ENCODE measurements at regions of chr7 and their contacts with region 1.

Region 1: DNA sequence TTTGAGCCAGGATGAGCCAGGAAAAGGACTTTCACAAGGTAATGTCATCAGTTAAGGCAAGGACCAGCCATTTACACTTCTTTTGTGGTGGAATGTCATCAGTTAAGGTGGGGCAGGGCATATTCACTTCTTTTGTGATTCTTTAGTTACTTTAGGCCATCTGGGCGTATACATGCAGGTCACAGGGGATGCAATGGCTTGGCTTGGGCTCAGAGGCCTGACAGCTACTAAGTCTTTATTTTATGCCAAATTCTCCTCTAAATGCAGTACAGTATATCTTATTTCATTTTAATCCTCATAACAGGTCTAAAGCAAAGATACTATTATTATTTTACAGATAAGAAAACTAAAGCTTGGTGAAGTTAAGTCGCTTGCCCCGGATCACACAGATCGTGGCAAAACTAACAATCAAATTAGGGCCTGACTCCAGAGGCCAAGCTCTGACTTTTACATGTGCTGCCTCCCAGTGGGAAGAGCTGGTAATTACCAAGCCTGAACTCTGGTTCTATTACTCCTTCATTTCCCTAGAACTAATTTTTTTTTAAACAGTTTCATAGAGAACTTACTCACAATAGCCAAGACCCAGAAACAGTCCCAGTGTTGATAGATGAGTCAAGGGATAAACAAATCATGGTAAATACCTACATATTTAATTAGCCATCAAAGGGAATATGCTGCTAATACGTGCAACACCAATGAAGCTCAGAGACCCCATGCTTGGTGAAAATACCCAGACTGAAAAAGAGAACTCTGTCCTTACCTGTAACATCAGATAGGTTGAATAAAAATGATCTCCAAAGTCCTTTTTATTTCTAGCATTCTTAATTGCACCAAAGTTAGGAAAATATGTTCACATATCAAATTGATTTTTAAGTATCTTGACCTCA is 35.4 kb downstream of the C7orf25 start:
- DNase-seq: no peak
- ATAC-seq: peak; percentile 87
- H3K4me3 Mint-ChIP-seq: no peak overlapping the region
- H3K27ac Mint-ChIP-seq: no peak overlapping the region
- H3K4me1 Mint-ChIP-seq: peaks cover 5% of the 10 kb centered on the region
- H3K27me3 Mint-ChIP-seq: no peaks in the 10 kb centered on the region
- CTCF ChIP-seq: peak; percentile 54

Region 2: GRCh38 chr7:41977151-41977651 is 899.2 kb before region 1 on chr7:
- CTCF ChIA-PET with region 1: no interaction called
- POLR2A ChIA-PET with region 1: no interaction called
- intact Hi-C with region 1: loop called (anchors 2 kb)
- DNase-seq: no peak
- ATAC-seq: no peak
- H3K4me3 Mint-ChIP-seq: no peak overlapping the region
- H3K27ac Mint-ChIP-seq: no peak overlapping the region
- H3K4me1 Mint-ChIP-seq: no peaks in the 10 kb centered on the region
- H3K27me3 Mint-ChIP-seq: peaks cover 9% of the 10 kb centered on the region
- CTCF ChIP-seq: no peak

Region 3: DNA sequence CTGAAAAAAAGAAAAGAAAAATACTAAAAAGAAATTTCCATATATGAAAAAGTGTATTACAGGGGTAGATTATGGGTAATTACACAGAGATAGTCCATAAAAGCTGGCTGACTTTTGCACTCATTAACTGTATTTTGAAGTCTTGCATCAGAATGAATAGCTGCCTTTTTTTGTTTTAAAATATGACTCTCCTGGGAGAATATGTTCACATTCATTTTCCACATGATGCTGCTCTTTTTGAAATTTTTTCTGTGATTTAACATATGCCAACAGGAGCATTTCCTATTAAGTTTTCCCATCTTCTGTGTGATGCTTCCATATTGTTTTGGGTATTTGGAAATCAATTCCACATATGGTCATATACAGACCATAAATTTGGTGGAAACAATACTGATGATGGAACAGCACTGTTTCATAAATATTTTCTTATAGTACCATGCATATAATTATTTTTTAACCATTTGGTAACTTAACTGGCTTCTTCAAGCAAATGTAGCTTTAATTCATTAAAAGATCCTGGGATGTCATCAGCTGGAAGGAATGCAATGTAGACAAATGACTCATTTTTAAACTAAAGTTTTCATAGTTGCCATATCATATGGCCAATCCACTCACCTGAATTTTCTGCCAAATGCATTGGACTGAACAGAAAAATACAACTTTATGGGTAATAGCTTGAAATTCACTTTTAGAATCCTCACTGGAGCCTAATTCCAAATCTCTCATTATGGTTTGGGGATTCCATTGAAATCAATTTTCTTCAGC is 325.5 kb before region 1 on chr7:
- CTCF ChIA-PET with region 1: no interaction called
- POLR2A ChIA-PET with region 1: no interaction called
- intact Hi-C with region 1: no loop called
- DNase-seq: no peak
- ATAC-seq: no peak
- H3K4me3 Mint-ChIP-seq: no peak overlapping the region
- H3K27ac Mint-ChIP-seq: no peak overlapping the region
- H3K4me1 Mint-ChIP-seq: no peaks in the 10 kb centered on the region
- H3K27me3 Mint-ChIP-seq: no peaks in the 10 kb centered on the region
- CTCF ChIP-seq: no peak

Region 4: GRCh38 chr7:43112941-43113621 is 236.7 kb after region 1 on chr7:
- CTCF ChIA-PET with region 1: no interaction called
- POLR2A ChIA-PET with region 1: no interaction called
- intact Hi-C with region 1: no loop called
- DNase-seq: no peak
- ATAC-seq: no peak
- H3K4me3 Mint-ChIP-seq: no peak overlapping the region
- H3K27ac Mint-ChIP-seq: no peak overlapping the region
- H3K4me1 Mint-ChIP-seq: peaks cover 8% of the 10 kb centered on the region
- H3K27me3 Mint-ChIP-seq: peaks cover 57% of the 10 kb centered on the region
- CTCF ChIP-seq: no peak